ENCODE measurements at regions of chr4 and their contacts with region 1.

Region 1: GRCh38 chr4:177047070-177047850 is 254.5 kb upstream of the VEGFC start:
- DNase-seq: peak in 1 of 2 experiments; percentile 72
- H3K4me3 ChIP-seq: no peak overlapping the region
- H3K27ac ChIP-seq: no peak overlapping the region
- H3K4me1 ChIP-seq: no peaks in the 10 kb centered on the region
- H3K27me3 ChIP-seq: no peaks in the 10 kb centered on the region
- CTCF ChIP-seq: peak; percentile 56 to 71 (median 65)
- EP300 ChIP-seq: no peak
- POLR2A ChIP-seq: no peak
- RAD21 ChIP-seq: peak; percentile 71 to 78

Region 2: GRCh38 chr4:176792671-176793605 is 254.3 kb before region 1 on chr4 and contains the start of gene VEGFC:
- CTCF ChIA-PET with region 1: interaction called, 11 read pairs
- POLR2A ChIA-PET with region 1: no interaction called
- DNase-seq: peak; percentile 34 to 72
- H3K4me3 ChIP-seq: peak within 1 kb of the TSS; percentile 61 to 93 (median 72)
- H3K27ac ChIP-seq: no peak within 1 kb of the TSS
- H3K4me1 ChIP-seq: 0 out of 7 replicates have a peak, but pooled peaks cover 0 to 2% (median 0%) of the 10 kb centered on the region in 4 experiments
- H3K27me3 ChIP-seq: peaks cover 4 to 18% (median 9%) of the 10 kb centered on the region in 4 experiments
- CTCF ChIP-seq: peak in 1 of 3 experiments; percentile 18; a peak in 1 of 4 replicates
- EP300 ChIP-seq: no peak
- POLR2A ChIP-seq: no peak
- RAD21 ChIP-seq: no peak
- total RNA-seq, gene VEGFC: 0.96 and 1.4 TPM in 2 replicates

Region 3: DNA sequence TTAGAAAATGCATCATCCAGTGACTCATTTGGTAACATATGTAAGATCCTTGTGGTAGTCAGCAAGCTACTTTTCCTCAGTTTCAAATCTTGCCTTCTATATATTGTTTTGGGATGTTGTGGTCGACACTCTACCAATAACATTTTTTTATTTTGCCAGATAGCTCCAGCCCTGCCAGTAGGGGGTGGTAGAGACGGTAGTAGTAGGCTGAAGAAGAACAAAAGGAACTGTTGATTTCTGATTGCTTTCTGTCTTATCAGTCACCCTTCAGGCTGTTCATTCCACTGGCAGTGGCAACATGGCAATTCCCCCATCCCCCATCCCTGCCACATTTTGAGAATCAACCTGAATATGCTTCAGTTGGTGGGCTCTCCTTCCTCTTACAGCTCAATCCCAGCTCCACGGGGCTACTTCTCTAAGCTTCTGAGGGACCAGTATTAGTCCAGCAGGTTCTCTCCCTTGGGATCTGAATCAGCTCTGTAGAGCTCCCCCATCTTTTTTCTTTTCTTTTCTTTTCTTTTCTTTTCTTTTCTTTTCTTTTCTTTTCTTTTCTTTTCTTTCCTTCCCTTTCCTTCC is 83.1 kb before region 1 on chr4:
- CTCF ChIA-PET with region 1: interaction called, 10 read pairs
- POLR2A ChIA-PET with region 1: no interaction called
- DNase-seq: peak in 1 of 2 experiments; percentile 63
- H3K4me3 ChIP-seq: no peak overlapping the region
- H3K27ac ChIP-seq: no peak overlapping the region
- H3K4me1 ChIP-seq: no peaks in the 10 kb centered on the region
- H3K27me3 ChIP-seq: no peaks in the 10 kb centered on the region
- CTCF ChIP-seq: peak in 2 of 3 experiments; percentile 40 to 62; a peak in 3 of 4 replicates
- EP300 ChIP-seq: no peak
- POLR2A ChIP-seq: no peak
- RAD21 ChIP-seq: peak; percentile 44 to 57

Region 4: GRCh38 chr4:177001271-177002175 is 45.7 kb before region 1 on chr4:
- CTCF ChIA-PET with region 1: no interaction called
- POLR2A ChIA-PET with region 1: no interaction called
- DNase-seq: no peak
- H3K4me3 ChIP-seq: no peak overlapping the region
- H3K27ac ChIP-seq: no peak overlapping the region
- H3K4me1 ChIP-seq: no peaks in the 10 kb centered on the region
- H3K27me3 ChIP-seq: no peaks in the 10 kb centered on the region
- CTCF ChIP-seq: no peak
- EP300 ChIP-seq: no peak
- POLR2A ChIP-seq: no peak
- RAD21 ChIP-seq: no peak

Region 5: DNA sequence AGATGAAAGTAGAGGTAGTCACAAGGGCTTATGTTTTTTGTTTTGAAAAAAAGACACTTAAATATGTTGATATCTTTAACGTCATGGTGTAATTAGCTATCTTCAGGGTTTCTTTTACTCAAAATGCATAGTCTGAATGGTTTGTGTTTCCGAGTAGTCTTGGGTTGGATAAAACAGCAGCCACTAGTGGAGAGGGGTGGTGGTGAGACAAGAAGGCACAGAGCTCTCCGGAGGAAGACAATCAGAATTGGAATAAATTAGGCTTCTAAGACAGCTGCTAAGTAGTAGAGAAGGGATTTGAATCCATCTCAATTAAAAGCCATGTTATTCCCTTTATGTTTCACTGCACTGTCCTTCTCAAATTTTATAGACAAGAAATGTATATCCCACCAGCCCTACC is 14.1 kb before region 1 on chr4:
- CTCF ChIA-PET with region 1: interaction called, 21 read pairs
- POLR2A ChIA-PET with region 1: no interaction called
- DNase-seq: no peak
- H3K4me3 ChIP-seq: no peak overlapping the region
- H3K27ac ChIP-seq: no peak overlapping the region
- H3K4me1 ChIP-seq: no peaks in the 10 kb centered on the region
- H3K27me3 ChIP-seq: no peaks in the 10 kb centered on the region
- CTCF ChIP-seq: peak in 2 of 3 experiments; percentile 32 to 44; a peak in 2 of 4 replicates
- EP300 ChIP-seq: no peak
- POLR2A ChIP-seq: no peak
- RAD21 ChIP-seq: peak; percentile 11 to 36; a peak in 2 of 4 replicates

Region 6: GRCh38 chr4:177093964-177094363 is 46.7 kb after region 1 on chr4:
- CTCF ChIA-PET with region 1: interaction called, 10 read pairs
- POLR2A ChIA-PET with region 1: no interaction called
- DNase-seq: no peak
- H3K4me3 ChIP-seq: no peak overlapping the region
- H3K27ac ChIP-seq: no peak overlapping the region
- H3K4me1 ChIP-seq: no peaks in the 10 kb centered on the region
- H3K27me3 ChIP-seq: no peaks in the 10 kb centered on the region
- CTCF ChIP-seq: no peak
- EP300 ChIP-seq: no peak
- POLR2A ChIP-seq: no peak
- RAD21 ChIP-seq: no peak

Region 7: DNA sequence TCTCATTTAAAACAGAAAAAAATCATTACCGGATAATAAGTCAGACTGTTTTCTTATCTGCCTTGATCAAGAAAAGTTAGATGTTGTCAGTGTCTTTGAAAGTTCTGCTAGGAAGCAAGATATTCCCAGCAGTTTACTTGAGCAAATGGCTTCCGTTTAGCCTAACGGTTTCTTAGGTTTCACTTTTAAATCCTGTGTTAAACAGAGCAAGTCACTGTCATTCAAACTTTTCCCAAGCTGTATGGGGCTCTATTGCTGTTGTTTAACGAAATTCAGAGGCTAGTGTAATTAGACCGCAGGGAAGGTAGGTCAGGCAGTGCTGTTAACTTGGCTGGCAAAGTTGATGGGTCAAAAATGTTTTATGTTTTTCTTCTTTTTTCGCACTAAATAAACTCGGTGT is 182.1 kb after region 1 on chr4:
- CTCF ChIA-PET with region 1: no interaction called
- POLR2A ChIA-PET with region 1: no interaction called
- DNase-seq: no peak
- H3K4me3 ChIP-seq: no peak overlapping the region
- H3K27ac ChIP-seq: no peak overlapping the region
- H3K4me1 ChIP-seq: peaks cover 0 to 3% (median 0%) of the 10 kb centered on the region in 4 experiments; a peak in 5 of 7 replicates
- H3K27me3 ChIP-seq: no peaks in the 10 kb centered on the region
- CTCF ChIP-seq: no peak
- EP300 ChIP-seq: no peak
- POLR2A ChIP-seq: no peak
- RAD21 ChIP-seq: no peak